ENCODE measurements at regions of chr16 and their contacts with region 1.

Region 1: GRCh38 chr16:29790183-29790952 is at the start of gene KIF22:
- DNase-seq: peak; percentile 99 to 100 (median 100)
- ATAC-seq: peak; percentile 99
- H3K4me3 ChIP-seq: peak within 1 kb of the TSS; percentile 50 to 94 (median 82)
- H3K27ac ChIP-seq: peak within 1 kb of the TSS; percentile 62 to 94 (median 90)
- H3K4me1 ChIP-seq: peaks cover 0 to 32% (median 17%) of the 10 kb centered on the region in 12 donors
- H3K27me3 ChIP-seq: no peaks in the 10 kb centered on the region
- CTCF ChIP-seq: peak; percentile 57 to 93 (median 68)
- POLR2A ChIP-seq: peak in 1 of 2 donors; percentile 67
- total RNA-seq, gene KIF22: 16.8 to 40.8 (median 32.2) TPM

Region 2: GRCh38 chr16:29805378-29806098 is 15.2 kb after region 1 on chr16:
- intact Hi-C with region 1: loop called in 4 of 10 experiments (anchors 2 kb)
- DNase-seq: peak; percentile 98 to 99 (median 98)
- ATAC-seq: peak; percentile 84 to 89 (median 88)
- H3K4me3 ChIP-seq: peak overlapping the region; percentile 65 to 98 (median 83)
- H3K27ac ChIP-seq: peak overlapping the region; percentile 95 to 100 (median 99)
- H3K4me1 ChIP-seq: peaks cover 3 to 47% (median 42%) of the 10 kb centered on the region in 12 donors
- H3K27me3 ChIP-seq: no peaks in the 10 kb centered on the region
- CTCF ChIP-seq: no peak
- POLR2A ChIP-seq: peak in 1 of 2 donors; percentile 81

Region 3: DNA sequence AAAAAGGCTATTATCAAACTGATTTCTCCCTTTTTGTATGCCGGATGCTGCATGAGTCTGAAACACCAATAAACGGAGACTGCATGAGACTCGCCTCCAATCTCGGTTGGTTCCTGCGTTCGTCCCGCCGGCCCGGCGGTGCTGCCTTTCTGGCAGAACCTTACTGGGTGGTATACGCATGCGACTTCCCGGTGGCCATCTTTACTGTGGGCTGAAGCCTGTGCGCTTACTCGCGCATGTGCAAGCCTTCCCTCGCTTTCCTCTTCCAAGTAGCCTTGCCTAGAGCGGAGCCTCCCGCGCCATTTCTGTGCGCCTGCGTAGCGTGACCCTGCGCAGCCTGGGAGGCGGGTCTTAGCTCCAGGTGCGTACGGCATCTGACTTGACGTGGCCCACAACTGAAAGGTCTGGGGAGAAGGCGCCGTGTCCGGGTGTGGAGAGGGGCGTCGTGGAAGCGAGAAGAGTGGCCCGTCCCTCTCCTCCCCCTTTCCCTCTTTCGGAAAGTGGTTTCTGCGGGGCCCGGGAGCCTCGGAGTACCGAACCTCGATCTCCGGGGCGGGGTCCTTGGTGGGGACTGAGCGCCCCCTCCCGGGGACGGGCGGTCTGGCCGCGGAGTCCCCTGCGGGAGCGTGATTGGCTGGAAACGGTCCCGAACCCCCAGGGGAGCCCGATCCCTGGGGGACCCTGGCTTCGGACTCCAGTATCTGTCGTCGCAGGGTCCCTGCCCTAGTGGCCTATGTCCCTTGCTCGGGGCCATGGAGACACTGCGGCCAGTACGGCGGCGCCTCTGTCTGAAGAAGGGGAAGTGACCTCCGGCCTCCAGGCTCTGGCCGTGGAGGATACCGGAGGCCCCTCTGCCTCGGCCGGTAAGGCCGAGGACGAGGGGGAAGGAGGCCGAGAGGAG is 25.7 kb after region 1 on chr16 and contains the start of gene PAGR1:
- intact Hi-C with region 1: loop called in 1 of 10 experiments (anchors 2 kb)
- DNase-seq: peak; percentile 97 to 99 (median 99)
- ATAC-seq: peak; percentile 80 to 89 (median 86)
- H3K4me3 ChIP-seq: peak within 1 kb of the TSS; percentile 45 to 91 (median 74)
- H3K27ac ChIP-seq: peak within 1 kb of the TSS; percentile 84 to 97 (median 93)
- H3K4me1 ChIP-seq: peaks cover 3 to 71% (median 51%) of the 10 kb centered on the region in 12 donors
- H3K27me3 ChIP-seq: peaks cover 0 to 4% (median 0%) of the 10 kb centered on the region in 9 donors
- CTCF ChIP-seq: peak; percentile 82 to 98 (median 91)
- POLR2A ChIP-seq: peak in 1 of 2 donors; percentile 60
- total RNA-seq, gene PAGR1: 10.8 to 23.9 (median 12.6) TPM

Region 4: GRCh38 chr16:29839822-29840221 is 49.5 kb after region 1 on chr16:
- intact Hi-C with region 1: loop called in 1 of 10 experiments (anchors 5 kb)
- DNase-seq: peak in 1 of 5 donors; percentile 52
- ATAC-seq: peak in 3 of 4 donors; percentile 51 to 69 (median 62)
- H3K4me3 ChIP-seq: no peak overlapping the region
- H3K27ac ChIP-seq: no peak overlapping the region
- H3K4me1 ChIP-seq: peaks cover 0 to 6% (median 0%) of the 10 kb centered on the region in 12 donors
- H3K27me3 ChIP-seq: no peaks in the 10 kb centered on the region
- CTCF ChIP-seq: no peak
- POLR2A ChIP-seq: no peak

Region 5: GRCh38 chr16:30041846-30042267 is 251.5 kb after region 1 on chr16:
- intact Hi-C with region 1: no loop called
- DNase-seq: no peak
- ATAC-seq: no peak
- H3K4me3 ChIP-seq: no peak overlapping the region
- H3K27ac ChIP-seq: no peak overlapping the region
- H3K4me1 ChIP-seq: no peaks in the 10 kb centered on the region
- H3K27me3 ChIP-seq: peaks cover 0 to 4% (median 0%) of the 10 kb centered on the region in 9 donors
- CTCF ChIP-seq: peak; percentile 25 to 59 (median 46)
- POLR2A ChIP-seq: no peak

Measured in heart left ventricle (tissue), 16 donors.